OCI-LY7 (cell line): ENCODE measurements at regions of chr12 and their contacts with region 1.

Region 1: DNA sequence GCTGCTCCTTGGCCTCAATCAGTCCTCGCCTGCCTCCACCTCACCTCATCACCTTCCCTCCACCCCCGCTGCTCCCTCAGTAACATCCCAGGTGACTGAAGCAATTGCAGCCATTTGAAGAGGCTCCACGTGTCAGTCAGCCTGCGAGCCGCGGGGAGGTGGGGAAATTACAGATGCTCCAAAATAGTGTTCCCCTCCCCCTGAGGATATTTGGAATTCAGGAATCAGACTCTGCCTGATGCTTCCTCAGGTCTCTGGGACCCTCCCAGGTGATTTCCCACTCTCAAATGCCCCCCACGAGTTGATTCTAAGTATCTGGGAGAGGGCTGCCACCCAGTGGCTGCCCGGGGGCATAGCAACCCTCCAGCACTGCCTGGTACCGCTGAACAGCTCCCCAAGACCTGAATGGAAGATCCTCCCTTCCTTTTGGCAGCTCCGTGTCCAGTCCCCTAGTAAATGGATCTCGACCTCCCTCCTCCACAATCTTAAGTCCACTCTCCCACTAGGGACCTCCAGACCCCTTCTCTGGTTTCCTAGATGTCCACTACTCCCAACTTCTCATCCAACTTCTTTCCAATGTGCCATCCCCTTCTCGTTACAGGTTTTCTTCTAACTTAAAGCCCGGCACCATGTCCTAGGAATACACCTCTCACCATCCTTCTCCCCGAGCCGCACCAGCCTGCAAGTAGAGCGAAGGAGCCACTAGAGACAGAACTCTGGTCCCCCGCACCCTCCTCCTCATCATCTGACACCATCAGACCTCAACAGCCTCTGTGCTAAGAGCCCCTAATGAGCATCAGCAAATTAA is 1.4 kb upstream of the ASIC1 start:
- DNase-seq: peak; percentile 71
- H3K4me3 ChIP-seq: peak overlapping the region; percentile 22
- H3K27ac ChIP-seq: no peak overlapping the region
- H3K4me1 ChIP-seq: peaks cover 17% of the 10 kb centered on the region
- CTCF ChIP-seq: peak; percentile 100

Region 2: GRCh38 chr12:49866859-49867579 is 189.0 kb before region 1 on chr12:
- CTCF ChIA-PET with region 1: no interaction called
- POLR2A ChIA-PET with region 1: no interaction called
- intact Hi-C with region 1: loop called (anchors 10 kb)
- DNase-seq: peak; percentile 77
- H3K4me3 ChIP-seq: no peak overlapping the region
- H3K27ac ChIP-seq: no peak overlapping the region
- H3K4me1 ChIP-seq: no peaks in the 10 kb centered on the region
- CTCF ChIP-seq: peak; percentile 93

Region 3: GRCh38 chr12:49967042-49967776 is 88.8 kb before region 1 on chr12:
- CTCF ChIA-PET with region 1: interaction called, 13 read pairs
- POLR2A ChIA-PET with region 1: no interaction called
- intact Hi-C with region 1: loop called (anchors 1 kb)
- DNase-seq: peak; percentile 86
- H3K4me3 ChIP-seq: peak overlapping the region; percentile 61
- H3K27ac ChIP-seq: no peak overlapping the region
- H3K4me1 ChIP-seq: peaks cover 9% of the 10 kb centered on the region
- CTCF ChIP-seq: peak; percentile 90

Region 4: DNA sequence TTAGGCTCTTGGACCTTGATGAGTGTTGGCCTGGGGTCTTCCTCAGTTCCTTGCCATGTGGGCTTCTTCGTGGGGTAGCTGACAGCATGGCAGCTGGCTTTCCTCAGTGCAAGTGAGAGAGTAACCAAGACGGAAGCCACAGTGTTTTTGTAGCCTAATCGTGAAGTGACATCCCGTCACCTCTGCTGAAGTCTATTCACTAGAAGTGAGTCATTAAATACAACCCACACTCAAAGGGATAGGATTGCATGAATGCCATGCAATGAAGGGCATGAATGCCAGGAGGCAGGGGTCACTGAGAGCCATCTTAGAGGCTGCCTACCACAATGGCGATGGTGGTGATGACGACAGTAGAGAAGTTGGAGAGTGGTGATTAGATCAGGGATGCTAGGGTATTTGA is 12.2 kb before region 1 on chr12:
- CTCF ChIA-PET with region 1: no interaction called
- POLR2A ChIA-PET with region 1: no interaction called
- intact Hi-C with region 1: loop called (anchors 1 kb)
- DNase-seq: no peak
- H3K4me3 ChIP-seq: no peak overlapping the region
- H3K27ac ChIP-seq: no peak overlapping the region
- H3K4me1 ChIP-seq: peaks cover 13% of the 10 kb centered on the region
- CTCF ChIP-seq: no peak